Caco-2 (cell line): ENCODE measurements at regions of chr3 and their contacts with region 1.

Region 1: GRCh38 chr3:100537622-100538338 is 45.4 kb downstream of the TMEM45A start:
- DNase-seq: no peak
- H3K4me3 ChIP-seq: no peak overlapping the region
- H3K4me3 Mint-ChIP-seq: no peak overlapping the region
- H3K27ac Mint-ChIP-seq: no peak overlapping the region
- H3K4me1 ChIP-seq: peaks cover 3% of the 10 kb centered on the region; the same call in 1 of the 2 replicates
- H3K4me1 Mint-ChIP-seq: no peaks in the 10 kb centered on the region
- H3K27me3 ChIP-seq: no peaks in the 10 kb centered on the region
- H3K27me3 Mint-ChIP-seq: no peaks in the 10 kb centered on the region
- CTCF ChIP-seq: no peak

Region 2: DNA sequence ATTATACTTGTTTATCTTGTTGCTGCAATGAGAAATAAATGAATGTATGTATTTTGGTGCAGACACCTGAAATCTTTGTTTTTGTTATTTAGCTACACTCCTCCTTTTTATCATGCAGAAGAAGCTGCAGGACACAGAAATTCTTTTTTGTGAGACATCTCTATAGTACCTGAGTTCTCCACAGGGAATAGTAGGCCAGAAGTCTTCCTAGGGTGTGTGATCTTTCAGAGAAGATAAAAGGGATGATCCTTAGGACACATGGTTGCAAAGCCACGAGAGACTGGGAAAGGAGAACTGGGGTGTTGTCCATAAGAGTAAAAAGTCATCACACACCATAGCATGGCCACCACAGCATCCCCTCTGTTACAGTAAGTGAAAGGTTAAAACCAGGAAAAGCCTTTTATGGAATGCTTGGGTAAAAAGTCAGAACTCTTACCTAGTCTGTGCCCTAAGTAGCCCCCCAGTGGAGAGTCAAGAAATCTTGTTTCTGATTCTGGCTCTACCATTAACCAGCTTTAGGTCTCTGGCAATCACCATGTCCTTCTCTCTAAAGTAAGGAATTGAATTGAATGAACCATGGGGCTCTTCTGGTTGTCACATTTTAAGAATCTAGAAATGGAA is 39.7 kb after region 1 on chr3:
- CTCF ChIA-PET with region 1: no interaction called
- POLR2A ChIA-PET with region 1: no interaction called
- intact Hi-C with region 1: loop called (anchors 1 kb)
- DNase-seq: no peak
- H3K4me3 ChIP-seq: no peak overlapping the region
- H3K4me3 Mint-ChIP-seq: no peak overlapping the region
- H3K27ac Mint-ChIP-seq: no peak overlapping the region
- H3K4me1 ChIP-seq: 0 out of 2 replicates have a peak, but pooled peaks cover 4% of the 10 kb centered on the region
- H3K4me1 Mint-ChIP-seq: no peaks in the 10 kb centered on the region
- H3K27me3 ChIP-seq: no peaks in the 10 kb centered on the region
- H3K27me3 Mint-ChIP-seq: no peaks in the 10 kb centered on the region
- CTCF ChIP-seq: no peak